Sigmoid colon (tissue), 7 donors: ENCODE measurements at regions of chr4 and their contacts with region 1.

Region 1: DNA sequence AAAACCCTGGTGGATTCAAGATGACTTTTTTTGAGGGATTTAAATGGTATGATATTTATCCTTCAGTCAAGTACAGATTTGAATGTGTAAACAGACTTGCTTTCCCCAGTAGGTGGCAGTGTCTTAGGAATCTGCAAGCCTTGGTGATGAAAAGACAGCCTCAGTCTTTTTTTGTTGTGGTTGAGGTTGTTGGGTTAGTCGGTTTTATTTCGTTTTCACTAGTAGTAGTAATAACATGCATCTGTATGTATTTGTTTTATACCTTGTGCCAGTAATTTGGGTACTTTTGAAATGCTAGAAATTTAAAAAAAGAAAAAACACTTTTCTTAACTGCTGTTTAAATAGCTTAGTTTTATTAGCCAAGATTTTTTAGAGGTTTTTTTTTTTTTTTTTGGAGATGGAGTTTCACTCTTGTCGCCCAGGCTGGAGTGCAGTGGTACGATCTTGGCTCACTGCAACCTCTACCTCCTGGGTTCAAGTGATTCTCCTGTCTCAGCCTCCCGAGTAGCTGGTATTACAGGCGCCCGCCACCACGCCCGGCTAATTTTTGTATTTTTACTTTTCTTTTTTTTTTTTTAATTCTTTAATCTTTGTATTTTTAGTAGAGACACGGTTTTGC is 39.2 kb downstream of the COPS4 start:
- DNase-seq: no peak
- H3K4me3 ChIP-seq: no peak overlapping the region
- H3K27ac ChIP-seq: peak overlapping the region in 3 of 4 donors; percentile 58 to 79 (median 66)
- H3K4me1 ChIP-seq: peaks cover 0 to 30% (median 25%) of the 10 kb centered on the region in 4 donors
- H3K27me3 ChIP-seq: no peaks in the 10 kb centered on the region
- CTCF ChIP-seq: peak in 3 of 4 experiments; percentile 46 to 58 (median 52)
- EP300 ChIP-seq: no peak
- POLR2A ChIP-seq: no peak

Region 2: DNA sequence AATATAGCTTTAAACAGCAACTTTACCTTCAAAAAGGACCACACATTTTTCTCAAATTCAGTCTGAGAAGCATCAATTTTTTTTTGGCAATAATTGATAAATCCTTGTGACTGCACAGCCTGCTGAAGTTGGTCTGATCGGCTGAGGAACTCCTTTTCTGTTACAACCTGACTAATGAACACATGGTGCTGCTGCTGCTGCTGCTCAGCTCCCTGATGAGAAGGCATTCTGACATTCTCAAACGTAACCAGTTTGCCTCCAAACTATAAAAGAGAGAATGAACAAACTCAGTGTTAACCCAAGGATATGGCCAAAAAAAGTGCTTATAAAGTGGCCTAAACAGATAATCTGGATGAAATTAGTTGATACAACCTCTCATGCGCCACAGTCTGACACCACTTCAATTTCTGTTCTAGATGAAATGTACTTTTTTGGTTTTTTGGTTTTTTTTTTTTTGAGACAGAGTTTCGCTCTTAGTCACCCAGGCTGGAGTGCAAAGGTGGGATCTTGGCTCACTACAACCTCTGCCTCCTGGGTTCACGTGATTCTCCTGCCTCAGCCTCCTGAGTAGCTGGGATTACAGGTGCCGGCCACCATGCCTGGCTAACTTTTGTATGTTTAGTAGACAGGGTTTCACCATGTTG is 209.7 kb before region 1 on chr4:
- intact Hi-C with region 1: no loop called
- DNase-seq: no peak
- H3K4me3 ChIP-seq: no peak overlapping the region
- H3K27ac ChIP-seq: no peak overlapping the region
- H3K4me1 ChIP-seq: peaks cover 0 to 6% (median 3%) of the 10 kb centered on the region in 4 donors
- H3K27me3 ChIP-seq: no peaks in the 10 kb centered on the region
- CTCF ChIP-seq: no peak
- EP300 ChIP-seq: no peak
- POLR2A ChIP-seq: no peak

Region 3: GRCh38 chr4:83110223-83110945 is 36.2 kb after region 1 on chr4:
- intact Hi-C with region 1: loop called (anchors 5 kb)
- DNase-seq: peak; percentile 87
- H3K4me3 ChIP-seq: peak overlapping the region; percentile 35 to 67 (median 56)
- H3K27ac ChIP-seq: peak overlapping the region; percentile 37 to 65 (median 44)
- H3K4me1 ChIP-seq: peaks cover 0 to 12% (median 7%) of the 10 kb centered on the region in 4 donors
- H3K27me3 ChIP-seq: no peaks in the 10 kb centered on the region
- CTCF ChIP-seq: peak in 2 of 4 experiments; percentile 43 to 44
- EP300 ChIP-seq: no peak
- POLR2A ChIP-seq: no peak